Tibial artery (tissue), 4 donors: ENCODE measurements at regions of chr19 and their contacts with region 1.

Region 1: GRCh38 chr19:2840794-2841790 is at the start of gene ZNF555:
- DNase-seq: peak; percentile 100
- H3K4me3 ChIP-seq: peak within 1 kb of the TSS; percentile 68 to 97
- H3K27ac ChIP-seq: peak within 1 kb of the TSS; percentile 91
- H3K4me1 ChIP-seq: peaks cover 0 to 17% (median 10%) of the 10 kb centered on the region in 4 donors
- H3K27me3 ChIP-seq: no peaks in the 10 kb centered on the region
- CTCF ChIP-seq: peak; percentile 54 to 60

Region 2: DNA sequence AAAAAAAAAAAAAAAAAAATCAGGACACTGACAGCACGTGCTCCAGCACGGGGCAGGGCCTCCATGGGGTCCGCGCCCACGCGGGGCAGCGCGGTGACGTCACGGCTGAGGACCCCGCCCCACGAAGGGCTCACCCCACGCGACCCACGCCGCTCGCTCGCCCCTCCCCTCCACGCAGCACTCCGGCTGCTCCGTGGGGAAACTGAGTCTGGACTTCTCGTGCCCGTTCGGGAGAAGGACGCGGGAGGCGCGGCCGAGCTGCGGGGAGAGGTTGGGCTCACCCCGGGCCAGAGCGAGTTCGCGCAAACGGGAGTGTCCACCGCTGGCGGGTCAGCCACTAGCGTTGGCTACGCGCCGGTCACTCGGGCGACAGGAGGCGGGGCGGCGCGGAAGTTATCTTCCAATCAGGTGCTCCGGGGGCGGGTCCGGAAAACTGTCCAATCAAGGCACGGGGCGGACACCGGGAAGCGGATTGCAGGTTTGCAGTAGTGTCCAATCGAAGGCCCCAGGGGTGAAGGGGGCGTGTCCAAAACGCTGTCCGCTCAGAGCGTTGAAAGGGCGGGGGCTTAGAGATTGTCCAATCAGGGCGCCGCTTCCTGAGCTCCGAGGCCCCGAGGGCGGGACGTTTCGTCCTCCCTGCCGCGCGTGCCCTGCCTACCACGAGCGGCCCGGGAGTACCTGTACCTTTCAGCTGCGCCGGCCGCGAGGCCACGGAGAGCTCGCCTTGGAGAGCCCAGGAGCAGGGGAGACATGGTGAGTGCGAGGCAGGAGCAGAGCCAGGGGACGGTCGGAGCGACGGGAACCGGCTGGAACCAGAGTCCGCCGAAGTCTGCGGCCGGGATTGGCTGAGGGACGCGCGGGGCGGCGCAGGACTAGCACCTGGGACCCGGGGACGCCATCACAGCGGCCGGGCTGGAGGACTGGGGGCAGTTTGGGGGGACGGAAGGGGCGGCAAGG is 59.5 kb after region 1 on chr19 and contains the start of gene ZNF57:
- intact Hi-C with region 1: loop called (anchors 1 kb)
- DNase-seq: peak; percentile 100
- H3K4me3 ChIP-seq: peak within 1 kb of the TSS; percentile 77
- H3K27ac ChIP-seq: peak within 1 kb of the TSS; percentile 66 to 73
- H3K4me1 ChIP-seq: peaks cover 0 to 17% (median 8%) of the 10 kb centered on the region in 4 donors
- H3K27me3 ChIP-seq: no peaks in the 10 kb centered on the region
- CTCF ChIP-seq: peak in 1 of 2 experiments; percentile 14

Region 3: DNA sequence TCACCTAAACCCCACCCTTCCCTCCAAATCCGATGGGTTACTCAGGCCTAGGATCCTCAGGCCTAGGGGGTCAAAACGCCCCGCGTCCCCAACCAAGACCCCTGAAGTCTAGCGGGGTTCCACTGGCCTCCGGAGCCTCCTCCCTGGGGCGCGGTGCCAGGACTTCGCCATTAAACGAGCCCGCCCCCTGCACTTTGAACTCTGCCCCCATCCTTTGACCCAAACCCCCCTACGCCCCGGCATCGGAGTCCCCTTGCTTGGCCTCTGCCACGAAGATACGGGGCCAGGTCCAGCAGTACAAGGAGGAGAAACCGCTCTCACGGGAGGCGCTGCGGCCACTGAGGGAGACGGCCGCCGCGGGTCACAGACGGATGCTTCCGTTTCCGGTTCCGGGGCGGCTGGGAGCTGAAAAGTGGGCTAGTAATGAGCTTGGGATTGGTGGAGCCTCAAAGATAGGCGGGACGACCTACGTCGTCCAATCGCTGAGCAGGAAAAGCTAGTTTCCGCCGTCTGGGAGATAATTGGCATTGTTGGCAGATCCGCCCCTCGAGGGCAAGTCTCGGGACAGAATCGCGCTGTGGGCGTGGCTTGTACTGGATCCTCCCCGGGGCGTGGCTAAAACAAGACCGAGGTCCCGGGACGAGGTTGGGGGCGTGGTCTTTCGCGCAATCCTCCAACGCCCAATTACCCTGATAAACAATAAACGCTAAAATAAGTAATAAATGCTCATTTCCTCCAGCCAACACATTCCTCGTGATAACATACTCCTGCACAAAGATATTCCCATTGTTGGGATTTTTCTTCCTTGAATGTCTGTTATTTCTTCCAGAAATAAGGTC is 109.4 kb after region 1 on chr19:
- intact Hi-C with region 1: no loop called
- DNase-seq: peak; percentile 100
- H3K4me3 ChIP-seq: peak overlapping the region; percentile 75 to 95
- H3K27ac ChIP-seq: peak overlapping the region; percentile 94 to 98
- H3K4me1 ChIP-seq: peaks cover 0 to 15% (median 14%) of the 10 kb centered on the region in 4 donors
- H3K27me3 ChIP-seq: peaks cover 0 to 3% of the 10 kb centered on the region in 2 donors
- CTCF ChIP-seq: no peak